ENCODE measurements at regions of chr17 and their contacts with region 1.

Region 1: GRCh38 chr17:75131280-75132017 is at the start of gene NT5C:
- DNase-seq: peak; percentile 70
- H3K4me3 Mint-ChIP-seq: peak within 1 kb of the TSS; percentile 92
- H3K27ac Mint-ChIP-seq: peak within 1 kb of the TSS; percentile 88
- H3K4me1 Mint-ChIP-seq: peaks cover 12% of the 10 kb centered on the region
- H3K27me3 Mint-ChIP-seq: no peaks in the 10 kb centered on the region
- total RNA-seq, gene NT5C: 80.0 and 80.1 TPM in 2 replicates

Region 2: GRCh38 chr17:74981979-74982662 is 149.3 kb before region 1 on chr17:
- intact Hi-C with region 1: no loop called
- DNase-seq: peak; percentile 79
- H3K4me3 Mint-ChIP-seq: peak overlapping the region; percentile 89
- H3K27ac Mint-ChIP-seq: peak overlapping the region; percentile 74
- H3K4me1 Mint-ChIP-seq: peaks cover 17% of the 10 kb centered on the region
- H3K27me3 Mint-ChIP-seq: peaks cover 61% of the 10 kb centered on the region

Region 3: DNA sequence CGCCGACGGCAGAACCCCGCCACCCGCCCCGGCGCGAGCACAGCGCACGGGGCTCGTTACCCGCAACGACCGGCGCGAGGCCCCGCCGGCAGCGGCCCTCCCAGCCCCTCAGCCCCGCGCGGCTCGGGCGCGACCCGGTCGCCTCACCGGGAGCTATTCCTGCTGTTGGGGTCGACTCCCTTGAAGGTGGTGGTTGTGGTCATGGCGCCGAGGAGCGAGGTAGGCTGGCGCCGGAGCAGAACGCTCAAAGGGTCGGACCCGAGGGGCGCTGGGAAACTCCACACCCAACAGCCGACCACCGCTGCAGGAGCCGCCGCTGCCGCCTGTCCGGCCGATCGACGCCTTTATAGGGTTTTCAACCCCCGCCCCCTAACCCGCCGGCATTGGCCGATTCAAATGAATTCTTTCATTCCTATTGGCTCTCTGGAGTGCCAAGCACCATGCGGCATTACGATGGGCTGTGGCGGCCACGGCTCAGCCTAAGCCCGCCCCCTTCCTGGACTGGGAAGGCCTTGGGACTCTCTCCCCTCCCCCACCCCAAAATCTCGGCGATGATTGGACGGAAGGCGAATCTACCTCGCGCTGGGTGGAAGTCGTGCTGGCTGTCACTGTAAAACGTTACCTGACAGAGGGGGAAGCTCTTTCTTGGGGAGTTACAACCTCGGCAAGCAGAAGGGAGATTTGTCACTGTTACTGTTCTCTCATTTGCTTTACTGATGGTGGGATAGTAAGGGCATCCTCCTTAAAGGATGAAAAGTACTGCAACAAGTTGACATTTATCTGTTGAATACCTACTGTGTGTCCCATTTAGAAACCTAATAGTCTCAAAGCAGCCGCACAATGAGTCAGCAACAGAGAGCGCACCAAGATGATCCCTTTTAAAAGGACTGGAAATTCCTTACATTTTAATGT is 23.0 kb after region 1 on chr17 and contains the start of gene JPT1:
- intact Hi-C with region 1: loop called (anchors 1 kb)
- DNase-seq: peak; percentile 97
- H3K4me3 Mint-ChIP-seq: peak within 1 kb of the TSS; percentile 97
- H3K27ac Mint-ChIP-seq: peak within 1 kb of the TSS; percentile 93
- H3K4me1 Mint-ChIP-seq: peaks cover 34% of the 10 kb centered on the region
- H3K27me3 Mint-ChIP-seq: no peaks in the 10 kb centered on the region
- total RNA-seq, gene JPT1: 271 and 299 TPM in 2 replicates

Region 4: GRCh38 chr17:75182569-75183450 is 51.4 kb after region 1 on chr17 and contains the start of gene SUMO2:
- intact Hi-C with region 1: loop called (anchors 2 kb)
- DNase-seq: peak; percentile 93
- H3K4me3 Mint-ChIP-seq: peak within 1 kb of the TSS; percentile 99
- H3K27ac Mint-ChIP-seq: peak within 1 kb of the TSS; percentile 98
- H3K4me1 Mint-ChIP-seq: peaks cover 38% of the 10 kb centered on the region
- H3K27me3 Mint-ChIP-seq: no peaks in the 10 kb centered on the region
- total RNA-seq, gene SUMO2: 649 and 656 TPM in 2 replicates

Region 5: DNA sequence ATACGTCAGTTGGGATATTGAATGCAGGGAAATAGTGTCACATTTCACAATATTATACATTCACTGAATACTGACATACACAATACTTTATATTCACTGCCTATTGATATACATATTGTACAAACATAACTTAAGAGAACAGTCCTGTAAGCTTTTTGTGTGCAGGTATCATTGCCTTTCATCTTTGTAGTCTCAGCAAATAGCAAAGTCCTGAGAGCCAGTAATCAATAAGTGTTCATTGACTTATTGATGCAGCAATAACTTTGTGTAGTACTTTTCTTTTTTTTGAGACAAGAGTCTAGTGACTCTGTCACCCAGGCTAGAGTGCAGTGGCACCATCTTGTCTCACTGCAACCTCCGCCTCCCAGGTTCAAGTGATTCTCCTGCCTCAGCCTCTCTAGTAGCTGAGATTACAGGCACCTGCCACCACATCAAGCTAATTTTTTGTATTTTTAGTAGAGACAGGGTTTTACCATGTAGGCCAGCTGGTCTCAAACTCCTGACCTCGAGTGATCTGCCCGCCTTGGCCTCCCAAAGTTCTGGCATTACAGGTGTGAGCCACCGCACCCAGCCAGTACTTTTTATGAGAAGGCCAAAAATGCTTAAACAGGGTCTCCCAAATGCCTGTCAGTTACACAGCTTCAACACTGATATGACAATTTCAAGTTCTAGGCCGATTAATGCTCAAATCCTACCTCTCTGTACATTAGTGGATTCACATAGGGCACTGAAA is 68.6 kb after region 1 on chr17:
- intact Hi-C with region 1: loop called (anchors 5 kb)
- DNase-seq: no peak
- H3K4me3 Mint-ChIP-seq: no peak overlapping the region
- H3K27ac Mint-ChIP-seq: no peak overlapping the region
- H3K4me1 Mint-ChIP-seq: peaks cover 11% of the 10 kb centered on the region
- H3K27me3 Mint-ChIP-seq: no peaks in the 10 kb centered on the region

Region 6: DNA sequence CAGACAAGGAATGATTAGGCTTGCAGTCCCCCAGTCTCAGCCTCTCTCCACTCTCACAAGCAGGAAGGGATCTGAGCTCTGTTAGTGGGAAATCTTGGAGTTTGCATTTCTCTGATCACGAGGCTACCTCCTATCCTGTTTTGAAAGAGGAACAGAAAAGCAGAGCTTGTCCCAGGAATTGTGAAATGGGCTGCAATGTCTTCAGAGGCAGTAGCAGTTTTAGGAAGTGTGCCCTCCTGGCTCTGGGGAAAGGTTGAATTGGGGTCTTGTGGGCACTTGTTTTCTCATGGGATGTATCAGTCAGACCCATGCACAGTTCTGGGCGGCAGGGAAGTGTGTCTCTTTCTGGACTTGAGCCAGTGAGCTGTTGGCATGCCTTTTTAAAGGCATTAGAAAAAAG is 96.9 kb after region 1 on chr17:
- intact Hi-C with region 1: no loop called
- DNase-seq: no peak
- H3K4me3 Mint-ChIP-seq: no peak overlapping the region
- H3K27ac Mint-ChIP-seq: no peak overlapping the region
- H3K4me1 Mint-ChIP-seq: no peaks in the 10 kb centered on the region
- H3K27me3 Mint-ChIP-seq: no peaks in the 10 kb centered on the region